ENCODE measurements at regions of chr12 and their contacts with region 1.

Region 1: DNA sequence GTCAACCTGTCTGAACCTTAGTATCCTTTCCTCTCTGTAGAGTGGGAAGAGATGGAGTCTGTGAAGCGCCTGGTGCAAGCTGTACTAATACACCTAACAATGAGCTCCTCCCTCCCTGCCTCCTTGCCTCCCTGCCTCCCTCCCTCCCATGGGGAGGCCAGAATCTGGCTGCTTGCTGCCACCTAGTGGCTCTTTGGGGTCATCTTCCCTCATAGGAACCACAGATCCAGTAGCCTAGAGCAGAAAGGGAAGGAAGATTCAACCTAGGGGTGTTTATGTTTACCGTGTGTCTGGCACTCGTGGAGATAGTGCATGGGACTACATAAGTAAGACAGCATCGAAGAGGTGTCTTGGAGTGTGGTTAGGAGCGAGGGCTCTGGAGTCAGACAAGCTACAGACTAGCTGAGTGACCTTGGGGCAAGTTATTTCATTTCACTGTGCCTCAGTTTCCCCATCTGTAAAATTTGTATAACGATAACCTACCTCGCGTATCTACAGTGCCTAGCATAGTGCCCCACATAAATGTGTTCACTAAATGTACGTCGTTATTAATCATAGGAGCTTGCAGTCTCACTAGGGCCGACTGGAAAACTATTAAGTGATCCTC is 35.5 kb upstream of the TSPAN9 start:
- H3K4me3 ChIP-seq: no peak overlapping the region
- H3K27ac ChIP-seq: no peak overlapping the region
- H3K4me1 ChIP-seq: no peaks in the 10 kb centered on the region
- CTCF ChIP-seq: peak; percentile 33; the same call in 1 of the 2 replicates

Region 2: GRCh38 chr12:2845280-2845679 is 196.4 kb before region 1 on chr12:
- CTCF ChIA-PET with region 1: interaction called, 13 read pairs
- POLR2A ChIA-PET with region 1: no interaction called
- H3K4me3 ChIP-seq: no peak overlapping the region
- H3K27ac ChIP-seq: no peak overlapping the region
- H3K4me1 ChIP-seq: no peaks in the 10 kb centered on the region
- CTCF ChIP-seq: no peak

Region 3: DNA sequence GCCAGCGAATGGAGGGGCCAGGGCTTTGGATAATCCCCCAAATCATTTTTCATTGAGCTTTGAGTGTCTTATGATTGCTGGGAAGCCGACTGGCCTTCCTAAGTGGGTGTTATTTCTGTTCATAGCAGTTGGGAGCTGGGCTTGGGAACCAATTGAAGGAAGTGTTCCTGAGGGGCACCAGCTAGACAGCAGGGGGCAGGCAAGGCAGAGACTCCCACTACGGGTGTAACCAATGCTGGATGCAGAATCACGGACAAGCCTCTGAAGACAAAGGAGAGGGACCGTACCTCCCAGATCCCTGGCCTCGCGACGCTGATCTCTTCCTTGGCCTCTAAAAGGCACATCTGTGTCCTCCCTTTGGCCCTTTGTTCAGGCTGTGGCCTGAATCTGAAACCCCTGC is 300.4 kb after region 1 on chr12:
- CTCF ChIA-PET with region 1: no interaction called
- POLR2A ChIA-PET with region 1: no interaction called
- H3K4me3 ChIP-seq: no peak overlapping the region
- H3K27ac ChIP-seq: no peak overlapping the region
- H3K4me1 ChIP-seq: no peaks in the 10 kb centered on the region
- CTCF ChIP-seq: peak; percentile 57